ENCODE measurements at regions of chrX and their contacts with region 1.

Region 1: DNA sequence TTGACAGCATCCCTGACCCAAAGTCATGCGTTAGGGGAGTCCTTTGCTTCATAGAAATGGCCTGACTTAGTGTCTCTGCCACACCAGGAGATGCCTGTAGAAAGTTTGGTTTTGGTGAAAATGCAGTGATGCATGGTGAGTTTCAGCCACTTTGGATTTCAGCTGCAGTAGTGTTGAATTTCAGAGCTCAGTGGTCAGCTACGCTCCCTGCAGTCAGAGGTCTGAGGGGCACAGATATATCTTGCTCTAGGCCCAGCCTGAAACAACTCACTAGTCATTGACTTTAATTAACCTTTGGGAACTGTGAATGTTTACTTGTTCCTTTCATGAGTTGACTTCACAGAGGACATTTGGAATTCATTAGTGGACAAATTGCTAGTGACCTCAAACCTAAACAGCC is 17.5 kb downstream of the RBMX2 start:
- DNase-seq: no peak
- H3K4me3 ChIP-seq: no peak overlapping the region
- H3K27ac ChIP-seq: no peak overlapping the region
- H3K4me1 ChIP-seq: no peaks in the 10 kb centered on the region
- H3K27me3 ChIP-seq: no peaks in the 10 kb centered on the region
- CTCF ChIP-seq: no peak
- POLR2A ChIP-seq: no peak

Region 2: GRCh38 chrX:130039847-130040246 is 379.4 kb before region 1 on chrX:
- intact Hi-C with region 1: loop called (anchors 5 kb)
- DNase-seq: no peak
- H3K4me3 ChIP-seq: no peak overlapping the region
- H3K27ac ChIP-seq: no peak overlapping the region
- H3K4me1 ChIP-seq: no peaks in the 10 kb centered on the region
- H3K27me3 ChIP-seq: peaks cover 0 to 2% of the 10 kb centered on the region in 2 donors
- CTCF ChIP-seq: no peak
- POLR2A ChIP-seq: no peak

Measured in breast epithelium (tissue), 4 donors.